ENCODE measurements at regions of chr11 and their contacts with region 1.

Region 1: GRCh38 chr11:43579171-43579918 is 101.2 kb upstream of the HSD17B12 start:
- DNase-seq: no peak
- ATAC-seq: peak in 1 of 2 donors; percentile 11

Region 2: GRCh38 chr11:43802509-43802908 is 223.2 kb after region 1 on chr11:
- intact Hi-C with region 1: loop called (anchors 10 kb)
- DNase-seq: no peak
- ATAC-seq: no peak